ENCODE measurements at regions of chr11 and their contacts with region 1.

Region 1: DNA sequence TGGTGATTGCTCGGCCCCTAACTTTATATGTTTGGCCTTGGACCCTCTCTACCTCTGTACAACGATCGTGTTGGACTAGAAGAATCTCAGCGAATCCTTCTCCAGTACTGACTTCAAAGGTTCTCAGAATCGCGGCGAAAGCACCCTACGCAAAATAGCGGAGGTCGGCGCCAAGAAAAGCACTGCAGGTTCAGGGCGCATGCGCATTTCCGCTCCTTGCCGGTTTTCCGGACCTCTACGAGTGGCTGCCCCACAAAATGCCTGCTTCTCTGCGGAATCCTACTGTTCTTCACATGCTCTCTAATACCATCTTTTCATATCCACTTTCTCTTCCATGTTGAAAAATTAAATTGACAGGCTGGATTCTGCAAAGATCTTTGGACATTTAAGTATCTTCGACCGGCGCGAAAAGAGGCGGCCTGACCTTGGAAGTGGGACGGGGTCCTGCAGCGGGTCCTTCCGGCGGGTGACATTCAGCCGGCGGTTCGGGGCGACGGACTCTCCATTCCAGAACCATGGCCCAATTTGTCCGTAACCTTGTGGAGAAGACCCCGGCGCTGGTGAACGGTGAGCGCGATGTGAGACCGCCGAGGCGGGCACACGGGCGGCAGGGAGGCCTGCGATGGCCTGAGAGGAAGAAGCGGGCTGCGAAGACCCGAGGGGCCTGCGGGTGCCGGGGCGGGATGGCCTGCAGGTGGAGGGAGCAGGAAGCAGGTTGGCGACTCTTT is at the start of gene ATP5MG:
- DNase-seq: peak; percentile 98
- H3K4me3 Mint-ChIP-seq: peak within 1 kb of the TSS; percentile 96
- H3K27ac Mint-ChIP-seq: peak within 1 kb of the TSS; percentile 99
- H3K4me1 Mint-ChIP-seq: peaks cover 57% of the 10 kb centered on the region
- H3K27me3 Mint-ChIP-seq: no peaks in the 10 kb centered on the region
- total RNA-seq, gene ATP5MG: 220 and 228 TPM in 2 replicates

Region 2: GRCh38 chr11:118046051-118046963 is 355.0 kb before region 1 on chr11:
- intact Hi-C with region 1: no loop called
- DNase-seq: peak; percentile 76
- H3K4me3 Mint-ChIP-seq: peak overlapping the region; percentile 51
- H3K27ac Mint-ChIP-seq: peak overlapping the region; percentile 87
- H3K4me1 Mint-ChIP-seq: peaks cover 75% of the 10 kb centered on the region
- H3K27me3 Mint-ChIP-seq: no peaks in the 10 kb centered on the region

Region 3: GRCh38 chr11:118251858-118252652 is 149.3 kb before region 1 on chr11 and contains the start of gene MPZL3:
- intact Hi-C with region 1: loop called (anchors 5 kb)
- DNase-seq: peak; percentile 94
- H3K4me3 Mint-ChIP-seq: peak within 1 kb of the TSS; percentile 97
- H3K27ac Mint-ChIP-seq: peak within 1 kb of the TSS; percentile 97
- H3K4me1 Mint-ChIP-seq: peaks cover 41% of the 10 kb centered on the region
- H3K27me3 Mint-ChIP-seq: no peaks in the 10 kb centered on the region
- total RNA-seq, gene MPZL3: 64.6 and 65.4 TPM in 2 replicates

Region 4: DNA sequence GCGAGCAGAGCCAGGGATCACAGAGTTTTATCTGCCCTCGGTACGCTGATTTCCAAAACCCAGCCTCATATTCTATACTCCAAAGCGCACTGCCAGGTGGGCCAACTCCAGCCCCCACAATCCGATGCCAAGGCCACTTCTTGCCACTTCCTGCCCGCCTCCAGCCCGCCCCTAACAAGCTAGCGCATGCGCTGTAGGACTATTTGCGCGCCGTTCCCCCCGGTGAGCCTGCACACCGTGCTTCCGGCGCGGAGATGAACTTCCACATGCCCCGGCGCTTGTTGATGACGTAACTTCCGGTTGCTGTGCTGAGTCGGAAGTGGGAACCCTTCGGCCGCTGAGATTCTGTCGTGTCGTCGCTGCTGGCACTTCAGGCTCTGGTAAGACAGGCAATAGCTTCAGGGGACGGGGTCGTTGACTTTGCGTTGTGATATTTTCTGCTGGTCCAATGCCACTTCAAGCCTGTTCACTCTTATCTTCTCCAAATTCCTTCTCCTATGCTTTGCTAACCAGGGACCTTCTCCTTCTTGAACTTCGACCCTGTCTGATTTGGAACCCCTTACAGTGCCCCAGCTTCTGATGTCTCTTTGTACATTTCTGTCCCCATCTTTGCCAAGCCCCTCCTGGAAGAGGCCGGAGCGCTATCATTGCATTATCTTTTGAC is 41.9 kb before region 1 on chr11 and contains the start of gene UBE4A:
- intact Hi-C with region 1: loop called (anchors 1 kb)
- DNase-seq: peak; percentile 99
- H3K4me3 Mint-ChIP-seq: peak within 1 kb of the TSS; percentile 93
- H3K27ac Mint-ChIP-seq: peak within 1 kb of the TSS; percentile 91
- H3K4me1 Mint-ChIP-seq: peaks cover 36% of the 10 kb centered on the region
- H3K27me3 Mint-ChIP-seq: peaks cover 2% of the 10 kb centered on the region
- total RNA-seq, gene UBE4A: 46.3 and 47.9 TPM in 2 replicates

Region 5: DNA sequence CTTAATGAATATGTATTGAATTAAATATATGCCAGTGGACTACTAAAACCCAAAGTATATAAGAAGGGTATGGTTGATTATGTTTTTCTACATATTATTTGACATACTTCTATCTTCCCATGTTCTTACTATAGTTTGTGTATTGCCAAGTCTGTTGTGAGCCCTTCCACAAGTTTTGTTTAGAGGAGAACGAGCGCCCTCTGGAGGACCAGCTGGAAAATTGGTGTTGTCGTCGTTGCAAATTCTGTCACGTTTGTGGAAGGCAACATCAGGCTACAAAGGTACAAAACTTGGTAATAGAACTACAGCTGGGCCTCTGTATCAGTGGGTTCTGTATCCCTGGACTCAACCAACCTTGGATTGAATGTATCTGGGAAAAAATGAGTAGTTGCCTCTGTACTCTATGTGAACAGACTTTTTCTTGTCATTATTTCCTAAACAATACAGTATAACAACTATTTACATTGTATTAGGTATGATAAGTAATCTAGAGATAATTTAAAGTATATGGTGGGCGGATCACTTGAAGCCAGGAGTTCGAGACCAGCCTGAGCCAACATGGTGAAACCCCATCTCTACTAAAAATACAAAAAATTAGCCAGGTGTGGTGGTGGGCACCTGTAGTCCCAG is 87.3 kb after region 1 on chr11:
- intact Hi-C with region 1: loop called (anchors 1 kb)
- DNase-seq: peak; percentile 93
- H3K4me3 Mint-ChIP-seq: no peak overlapping the region
- H3K27ac Mint-ChIP-seq: peak overlapping the region; percentile 3
- H3K4me1 Mint-ChIP-seq: peaks cover 10% of the 10 kb centered on the region
- H3K27me3 Mint-ChIP-seq: no peaks in the 10 kb centered on the region

Region 6: DNA sequence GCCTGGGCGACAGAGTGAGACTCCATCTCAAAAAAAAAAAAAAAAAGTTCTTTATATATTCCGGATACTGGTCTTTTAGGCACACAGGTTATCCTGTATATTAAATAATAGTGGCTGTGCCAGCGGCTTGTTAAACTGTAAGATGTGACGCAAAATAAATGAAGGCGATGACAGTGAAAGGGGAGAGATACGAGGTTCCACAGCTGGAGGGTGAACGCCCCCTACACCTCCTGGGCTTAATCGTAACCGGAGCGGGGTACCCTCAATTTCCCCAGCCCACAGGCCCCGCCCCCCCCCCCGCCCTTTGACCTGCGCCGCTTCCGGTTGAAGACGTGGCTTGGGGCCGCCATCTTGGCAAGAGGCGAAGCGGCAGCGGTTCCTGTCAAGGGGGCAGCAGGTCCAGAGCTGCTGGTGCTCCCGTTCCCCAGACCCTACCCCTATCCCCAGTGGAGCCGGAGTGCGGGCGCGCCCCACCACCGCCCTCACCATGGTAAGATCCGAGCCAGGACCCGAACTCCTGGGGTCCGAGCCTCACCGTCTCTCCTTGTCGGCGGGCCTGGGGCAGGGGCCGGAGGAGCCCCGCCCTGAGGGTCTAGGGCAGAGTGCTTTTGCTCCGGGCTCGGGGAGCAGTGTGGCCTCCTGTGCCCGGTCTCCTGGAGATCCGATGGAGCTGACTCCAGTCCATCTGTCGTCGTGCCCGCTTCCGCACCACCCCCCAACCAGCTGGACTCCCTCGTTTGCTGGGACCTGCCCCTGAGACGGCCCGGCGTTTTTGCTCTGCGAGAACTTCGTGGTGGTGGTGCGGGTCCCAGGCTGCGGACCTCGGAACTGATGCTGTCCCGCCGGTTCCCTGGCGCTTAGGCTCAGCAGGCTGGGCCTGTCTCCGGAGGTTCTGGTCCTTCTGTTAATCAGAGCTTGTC is 171.0 kb after region 1 on chr11 and contains the start of gene ARCN1:
- intact Hi-C with region 1: loop called (anchors 2 kb)
- DNase-seq: peak; percentile 93
- H3K4me3 Mint-ChIP-seq: peak within 1 kb of the TSS; percentile 97
- H3K27ac Mint-ChIP-seq: peak within 1 kb of the TSS; percentile 93
- H3K4me1 Mint-ChIP-seq: peaks cover 34% of the 10 kb centered on the region
- H3K27me3 Mint-ChIP-seq: no peaks in the 10 kb centered on the region
- total RNA-seq, gene ARCN1: 147 and 150 TPM in 2 replicates